Panc1 (cell line): ENCODE measurements at regions of chr21 and their contacts with region 1.

Region 1: DNA sequence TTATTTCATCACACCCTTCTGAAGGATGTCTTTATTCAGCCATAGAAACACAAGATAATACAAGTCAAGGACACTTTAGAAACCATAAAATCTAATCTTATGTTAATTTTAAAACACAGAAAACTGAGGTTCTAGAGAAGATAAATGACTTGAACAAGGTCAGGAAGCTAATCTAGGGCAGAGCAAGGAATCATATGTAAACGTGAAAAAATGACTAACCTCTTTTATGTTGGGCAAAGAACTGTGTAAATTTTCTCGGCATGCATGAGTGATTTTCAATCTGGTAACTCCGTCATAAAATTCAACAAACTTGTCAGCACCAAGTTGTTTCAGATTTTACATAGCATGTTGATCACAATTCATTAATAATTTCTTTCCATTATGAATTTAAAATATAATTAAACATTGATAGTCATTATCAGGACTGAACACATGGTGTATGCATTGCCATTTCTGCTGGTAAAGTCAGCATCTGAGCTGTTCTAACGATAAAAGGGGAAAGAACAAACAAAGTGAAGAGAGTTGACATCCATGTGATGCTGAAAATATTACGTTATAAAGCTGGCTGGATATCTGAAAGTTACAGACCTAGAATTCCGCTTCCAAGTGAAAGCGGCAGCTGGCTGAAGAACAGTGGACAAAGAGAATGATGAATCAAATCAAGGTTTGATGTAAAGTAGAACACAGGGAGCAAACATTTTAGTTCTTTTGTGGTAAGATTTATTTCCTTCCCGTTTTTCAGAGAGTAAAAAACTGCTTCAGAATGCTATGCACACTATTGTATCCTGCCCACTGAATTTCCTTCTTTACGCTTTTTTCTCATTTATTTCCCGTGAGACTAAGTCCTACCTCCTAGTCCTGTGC is 1037.4 kb upstream of the TMPRSS15 start:
- DNase-seq: no peak
- ATAC-seq: no peak
- H3K4me3 ChIP-seq: no peak overlapping the region
- H3K27ac ChIP-seq: no peak overlapping the region
- H3K4me1 ChIP-seq: no peaks in the 10 kb centered on the region
- H3K27me3 ChIP-seq: no peaks in the 10 kb centered on the region
- CTCF ChIP-seq: no peak

Region 2: DNA sequence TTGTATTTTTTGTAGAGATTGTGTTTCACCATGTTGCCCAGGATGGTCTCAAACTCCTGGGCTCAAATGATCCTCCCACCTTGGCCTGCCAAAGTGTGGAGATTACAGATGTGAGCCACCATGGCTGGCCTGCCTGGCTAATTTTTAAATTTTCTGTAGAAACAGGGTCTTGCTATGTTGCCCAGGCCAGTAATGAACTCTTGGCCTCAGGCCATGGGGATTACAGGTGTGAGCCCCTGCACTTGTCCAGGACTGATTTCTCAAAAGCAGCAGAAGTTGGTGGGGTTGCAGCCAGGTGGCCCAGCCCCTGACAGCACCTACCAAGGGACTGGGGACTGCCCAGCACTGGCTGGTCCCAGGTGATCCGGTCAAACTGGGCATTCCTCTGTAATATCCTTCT is 1972.3 kb before region 1 on chr21:
- CTCF ChIA-PET with region 1: no interaction called
- POLR2A ChIA-PET with region 1: interaction called, 12 read pairs
- in situ Hi-C with region 1: no loop called
- intact Hi-C with region 1: no loop called
- DNase-seq: no peak
- ATAC-seq: no peak
- H3K4me3 ChIP-seq: no peak overlapping the region
- H3K27ac ChIP-seq: no peak overlapping the region
- H3K4me1 ChIP-seq: no peaks in the 10 kb centered on the region; the same call in 1 of the 2 replicates
- H3K27me3 ChIP-seq: no peaks in the 10 kb centered on the region
- CTCF ChIP-seq: no peak